Naive thymus-derived CD8-positive, alpha-beta T cell (primary cell): ENCODE measurements at regions of chr17 and their contacts with region 1.

Region 1: DNA sequence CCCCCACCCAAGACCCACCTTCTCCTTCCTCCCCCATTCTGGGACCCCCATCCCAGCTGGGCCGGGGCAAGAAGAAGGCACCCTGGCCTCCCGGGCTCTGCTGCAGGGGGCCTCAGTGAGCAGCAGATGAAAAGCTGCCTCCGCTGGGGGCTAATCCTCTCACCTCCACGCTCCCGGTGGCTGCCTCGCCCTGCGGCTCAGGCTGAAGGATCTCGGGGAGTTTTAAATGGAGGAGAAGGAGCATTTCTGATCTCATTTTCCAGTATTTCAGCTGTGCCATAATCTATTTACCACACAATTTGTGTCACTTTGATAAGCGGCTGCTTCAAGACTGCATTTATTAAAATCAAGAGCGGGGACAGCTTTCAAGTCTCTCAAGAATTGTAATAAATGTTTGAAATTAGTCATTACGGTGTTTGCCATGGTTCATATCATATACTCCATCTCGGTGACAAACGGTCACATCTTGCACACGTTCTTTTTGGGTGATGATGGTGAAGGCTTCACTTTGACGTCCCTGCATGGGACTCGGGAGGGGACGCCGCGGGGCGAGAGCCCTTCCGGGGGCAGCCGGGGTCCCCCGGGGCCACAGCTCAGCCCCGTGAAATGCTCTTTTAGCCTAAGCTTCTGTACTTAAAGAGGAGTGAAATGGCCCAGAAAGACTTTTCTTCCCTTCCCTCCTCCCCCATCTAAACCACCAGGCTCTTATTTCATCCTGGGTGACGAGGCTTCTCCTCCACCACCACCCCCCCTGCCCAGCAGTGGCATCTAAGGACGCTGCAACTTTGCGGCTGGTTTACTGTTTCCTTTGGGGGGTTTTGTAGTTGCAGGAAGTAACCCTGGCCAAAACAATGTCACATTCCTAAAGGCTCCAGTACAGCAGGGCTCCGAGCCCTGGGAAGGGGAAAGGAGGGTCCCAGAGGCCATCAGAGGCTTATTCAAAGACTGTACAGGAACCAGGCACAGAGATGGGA is 313.1 kb upstream of the TNRC6C start:
- DNase-seq: peak; percentile 28 to 82 (median 70)
- ATAC-seq: peak; percentile 90 to 95
- H3K4me3 Mint-ChIP-seq: peak overlapping the region; percentile 74 to 90 (median 84)
- H3K27ac Mint-ChIP-seq: peak overlapping the region; percentile 89 to 98 (median 97)
- H3K4me1 Mint-ChIP-seq: peaks cover 18 to 42% (median 29%) of the 10 kb centered on the region in 4 donors
- H3K27me3 Mint-ChIP-seq: no peaks in the 10 kb centered on the region

Region 2: GRCh38 chr17:77666881-77667395 is 21.6 kb after region 1 on chr17:
- POLR2A ChIA-PET with region 1: interaction called, 21 read pairs
- DNase-seq: peak; percentile 43 to 87 (median 76)
- ATAC-seq: peak; percentile 90 to 91
- H3K4me3 Mint-ChIP-seq: peak overlapping the region; percentile 88 to 98 (median 94)
- H3K27ac Mint-ChIP-seq: peak overlapping the region; percentile 94 to 99 (median 98)
- H3K4me1 Mint-ChIP-seq: peaks cover 32 to 67% (median 52%) of the 10 kb centered on the region in 4 donors
- H3K27me3 Mint-ChIP-seq: no peaks in the 10 kb centered on the region